ENCODE measurements at regions of chr6 and their contacts with region 1.

Region 1: DNA sequence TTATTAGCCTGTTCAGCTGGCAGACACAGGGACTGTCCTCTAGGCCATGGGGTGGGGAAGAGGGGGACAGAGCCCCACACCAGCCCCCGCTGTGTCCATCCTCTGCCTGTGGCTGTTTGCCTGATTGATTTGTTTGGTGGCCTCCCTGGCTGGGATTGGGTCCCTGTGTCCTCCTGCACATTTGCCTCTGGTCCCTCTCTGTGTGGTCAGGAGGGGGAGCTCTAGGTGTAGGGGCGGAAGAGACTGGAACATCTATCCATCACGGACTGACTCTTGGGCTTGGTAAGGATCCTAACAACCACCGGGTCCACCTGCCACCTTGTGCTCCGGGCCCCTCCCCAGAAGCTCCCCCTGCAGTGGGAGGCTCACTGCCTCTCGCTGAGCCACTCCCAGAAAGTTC is 38.4 kb upstream of the CCDC167 start:
- DNase-seq: no peak
- ATAC-seq: no peak
- H3K4me3 ChIP-seq: no peak overlapping the region
- H3K4me3 Mint-ChIP-seq: peak overlapping the region; percentile 34
- H3K27ac ChIP-seq: no peak overlapping the region
- H3K27ac Mint-ChIP-seq: peak overlapping the region; percentile 32
- H3K4me1 ChIP-seq: peaks cover 30 to 56% of the 10 kb centered on the region in 2 donors
- H3K4me1 Mint-ChIP-seq: peaks cover 15% of the 10 kb centered on the region
- H3K27me3 ChIP-seq: peaks cover 0 to 34% (median 9%) of the 10 kb centered on the region in 4 experiments
- H3K27me3 Mint-ChIP-seq: peaks cover 13% of the 10 kb centered on the region
- CTCF ChIP-seq: no peak

Region 2: DNA sequence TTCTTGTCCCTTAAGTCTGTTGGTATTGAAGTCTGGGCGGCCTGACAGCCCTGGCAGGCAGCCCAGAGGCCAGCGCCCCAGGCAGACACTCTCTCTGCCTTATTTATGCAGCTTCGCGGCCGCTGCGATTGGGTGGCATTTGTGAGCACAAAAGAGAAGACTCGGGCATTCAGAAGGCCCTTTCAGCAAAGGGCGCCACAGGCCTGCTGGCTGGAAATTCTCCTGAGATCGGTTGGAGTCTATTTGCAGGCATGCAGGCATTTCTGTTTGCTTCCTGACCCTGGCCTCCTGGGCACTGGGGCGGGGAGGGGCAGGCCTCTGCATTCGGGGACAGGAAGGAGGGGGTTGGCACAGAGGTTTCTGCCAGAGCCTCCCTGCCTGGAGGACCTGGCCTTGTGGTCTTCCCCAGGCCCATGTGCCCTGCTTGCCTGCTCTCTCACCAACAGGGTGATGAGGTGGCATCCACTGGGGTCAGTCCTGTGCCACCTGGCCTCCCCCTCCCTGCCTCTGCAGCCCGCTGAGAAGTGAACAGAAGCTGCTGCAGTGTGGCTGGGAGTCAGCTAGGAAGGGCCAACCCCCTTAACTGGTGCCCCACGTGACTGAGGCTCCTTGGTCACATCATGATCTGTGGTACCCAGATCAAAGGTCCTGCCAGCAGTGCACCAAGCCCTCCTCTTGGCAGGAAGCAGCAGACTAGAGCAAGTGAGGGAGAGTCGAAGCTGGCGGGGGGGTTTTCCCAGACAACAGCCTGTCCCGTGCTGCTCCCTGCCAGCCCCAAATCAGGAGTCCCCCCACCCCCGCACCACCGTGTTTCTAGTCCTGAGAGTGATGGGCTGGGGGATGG is 21.8 kb before region 1 on chr6:
- CTCF ChIA-PET with region 1: interaction called, 13 read pairs
- POLR2A ChIA-PET with region 1: interaction called, 5 read pairs
- intact Hi-C with region 1: no loop called
- DNase-seq: peak; percentile 73
- ATAC-seq: peak; percentile 82
- H3K4me3 ChIP-seq: peak overlapping the region in 2 of 5 experiments; percentile 5 to 29
- H3K4me3 Mint-ChIP-seq: peak overlapping the region; percentile 49
- H3K27ac ChIP-seq: peak overlapping the region; percentile 7 to 51
- H3K27ac Mint-ChIP-seq: peak overlapping the region; percentile 80
- H3K4me1 ChIP-seq: peaks cover 23 to 35% of the 10 kb centered on the region in 2 donors
- H3K4me1 Mint-ChIP-seq: peaks cover 26% of the 10 kb centered on the region
- H3K27me3 ChIP-seq: peaks cover 0 to 9% (median 0%) of the 10 kb centered on the region in 4 experiments
- H3K27me3 Mint-ChIP-seq: peaks cover 4% of the 10 kb centered on the region
- CTCF ChIP-seq: no peak

Region 3: GRCh38 chr6:37559501-37559900 is 21.4 kb after region 1 on chr6:
- CTCF ChIA-PET with region 1: interaction called, 179 read pairs
- POLR2A ChIA-PET with region 1: interaction called, 22 read pairs
- intact Hi-C with region 1: loop called (anchors 2 kb)
- DNase-seq: no peak
- ATAC-seq: no peak
- H3K4me3 ChIP-seq: no peak overlapping the region
- H3K4me3 Mint-ChIP-seq: peak overlapping the region; percentile 2
- H3K27ac ChIP-seq: peak overlapping the region; percentile 37 to 94
- H3K27ac Mint-ChIP-seq: peak overlapping the region; percentile 57
- H3K4me1 ChIP-seq: peaks cover 99 to 100% of the 10 kb centered on the region in 2 donors
- H3K4me1 Mint-ChIP-seq: peaks cover 100% of the 10 kb centered on the region
- H3K27me3 ChIP-seq: no peaks in the 10 kb centered on the region
- H3K27me3 Mint-ChIP-seq: no peaks in the 10 kb centered on the region
- CTCF ChIP-seq: no peak

Region 4: DNA sequence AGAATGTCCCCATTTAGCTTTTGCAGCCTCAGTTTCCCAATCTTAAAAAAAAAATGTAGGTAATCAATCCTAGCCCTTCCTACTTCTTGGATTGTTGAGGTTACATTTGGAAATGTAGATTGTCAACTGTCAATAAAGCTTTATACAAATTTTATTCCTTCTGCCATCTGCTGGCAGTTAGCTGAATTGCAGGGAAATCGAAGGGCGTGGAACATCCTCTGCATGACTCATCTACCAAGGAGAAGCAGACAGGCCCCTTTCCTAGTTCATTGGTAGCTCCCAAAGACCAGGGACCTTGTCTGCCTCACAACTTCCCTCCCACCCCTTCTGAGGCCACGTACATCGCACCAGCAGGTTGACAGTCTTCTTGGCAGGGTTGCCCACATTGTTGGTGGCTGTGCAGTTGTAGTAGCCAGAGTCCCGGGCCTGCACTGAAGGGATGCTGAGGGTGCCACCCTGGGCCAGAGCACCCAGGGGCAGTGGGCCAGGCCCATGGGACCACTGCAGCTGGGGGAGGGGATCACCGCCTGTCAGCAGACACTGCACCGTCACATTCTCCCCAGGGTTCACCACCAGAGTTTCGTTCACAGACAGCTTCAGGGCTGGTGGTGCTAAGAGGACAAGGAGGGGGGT is 115.9 kb after region 1 on chr6:
- CTCF ChIA-PET with region 1: interaction called, 11 read pairs
- POLR2A ChIA-PET with region 1: no interaction called
- intact Hi-C with region 1: no loop called
- DNase-seq: peak; percentile 60
- ATAC-seq: no peak
- H3K4me3 ChIP-seq: no peak overlapping the region
- H3K4me3 Mint-ChIP-seq: no peak overlapping the region
- H3K27ac ChIP-seq: no peak overlapping the region
- H3K27ac Mint-ChIP-seq: no peak overlapping the region
- H3K4me1 ChIP-seq: peaks cover 9% of the 10 kb centered on the region in 2 donors
- H3K4me1 Mint-ChIP-seq: peaks cover 8% of the 10 kb centered on the region
- H3K27me3 ChIP-seq: peaks cover 0 to 17% (median 6%) of the 10 kb centered on the region in 4 experiments
- H3K27me3 Mint-ChIP-seq: peaks cover 15% of the 10 kb centered on the region
- CTCF ChIP-seq: peak; percentile 71

Region 5: DNA sequence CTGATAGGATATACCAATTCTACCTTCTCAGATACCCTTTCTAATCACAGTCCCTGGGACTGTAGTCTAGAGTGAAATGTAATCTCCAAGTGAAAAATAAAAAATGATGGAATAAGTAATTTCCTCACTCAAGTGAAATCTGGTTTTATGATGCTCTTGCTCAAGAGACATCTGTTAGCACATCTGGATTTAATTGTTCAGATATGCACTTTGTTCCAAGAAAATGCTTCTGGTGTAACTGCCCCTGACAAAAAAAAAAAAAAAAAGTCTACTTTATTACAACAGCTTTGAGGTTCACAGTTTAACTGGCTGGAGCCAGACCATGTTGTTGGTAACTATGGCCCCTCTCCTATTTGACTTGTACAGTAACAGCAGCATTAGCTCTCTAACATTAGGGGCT is 849.9 kb after region 1 on chr6:
- CTCF ChIA-PET with region 1: no interaction called
- POLR2A ChIA-PET with region 1: no interaction called
- intact Hi-C with region 1: no loop called
- DNase-seq: no peak
- ATAC-seq: no peak
- H3K4me3 ChIP-seq: no peak overlapping the region
- H3K4me3 Mint-ChIP-seq: no peak overlapping the region
- H3K27ac ChIP-seq: no peak overlapping the region
- H3K27ac Mint-ChIP-seq: no peak overlapping the region
- H3K4me1 ChIP-seq: no peaks in the 10 kb centered on the region
- H3K4me1 Mint-ChIP-seq: peaks cover 5% of the 10 kb centered on the region
- H3K27me3 ChIP-seq: no peaks in the 10 kb centered on the region
- H3K27me3 Mint-ChIP-seq: no peaks in the 10 kb centered on the region
- CTCF ChIP-seq: no peak